Breast epithelium (tissue), 4 donors: ENCODE measurements at regions of chr6 and their contacts with region 1.

Region 1: GRCh38 chr6:138588805-138589434 is 89.6 kb upstream of the NHSL1 start:
- DNase-seq: peak in 1 of 2 donors; percentile 47
- H3K4me3 ChIP-seq: no peak overlapping the region
- H3K27ac ChIP-seq: no peak overlapping the region
- H3K4me1 ChIP-seq: no peaks in the 10 kb centered on the region
- H3K27me3 ChIP-seq: no peaks in the 10 kb centered on the region
- CTCF ChIP-seq: peak; percentile 87 to 95 (median 93)
- POLR2A ChIP-seq: no peak

Region 2: DNA sequence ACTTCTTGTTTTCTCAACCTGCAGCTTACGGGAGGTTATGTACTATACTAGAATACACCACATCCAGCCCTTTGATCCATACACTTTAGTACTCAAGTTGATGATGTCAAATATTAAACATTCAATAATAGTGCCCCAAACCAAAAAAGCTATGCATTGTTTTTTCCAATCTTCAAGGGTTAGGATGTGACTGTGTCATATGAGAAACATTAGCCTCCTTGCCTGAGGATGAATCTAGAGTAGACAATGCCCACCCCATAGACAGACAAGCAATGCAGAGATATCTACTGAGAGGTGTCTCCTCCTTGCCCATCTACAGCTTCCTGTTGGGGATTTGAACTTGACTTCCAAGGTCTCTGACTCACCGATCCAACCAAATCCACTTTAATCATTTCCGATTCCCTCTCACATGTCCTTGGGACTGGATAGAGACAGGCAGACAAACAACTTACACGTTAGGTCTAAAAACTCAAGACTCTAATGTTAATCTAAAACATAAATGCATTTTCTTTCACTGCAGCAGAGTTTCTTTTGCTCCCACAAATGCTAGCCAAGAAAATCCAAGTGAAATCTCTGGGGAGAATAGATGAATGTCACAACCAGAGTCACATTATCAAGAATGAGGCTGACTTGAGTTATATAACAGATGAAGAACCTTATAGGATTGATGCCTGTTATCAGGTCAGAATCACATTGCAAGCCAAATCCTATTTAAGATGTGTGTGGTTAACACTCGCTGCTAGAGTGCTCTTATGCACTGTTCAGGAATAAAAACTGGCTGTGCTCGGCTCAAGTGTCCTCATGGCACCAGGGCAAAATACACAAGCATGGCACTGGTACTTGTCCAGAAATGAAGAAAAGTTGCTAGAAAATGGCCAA is 797.4 kb before region 1 on chr6:
- intact Hi-C with region 1: no loop called
- DNase-seq: no peak
- H3K4me3 ChIP-seq: no peak overlapping the region
- H3K27ac ChIP-seq: no peak overlapping the region
- H3K4me1 ChIP-seq: no peaks in the 10 kb centered on the region
- H3K27me3 ChIP-seq: no peaks in the 10 kb centered on the region
- CTCF ChIP-seq: no peak
- POLR2A ChIP-seq: no peak

Region 3: GRCh38 chr6:138765896-138766655 is 177.2 kb after region 1 on chr6:
- intact Hi-C with region 1: loop called (anchors 5 kb)
- DNase-seq: no peak
- H3K4me3 ChIP-seq: no peak overlapping the region
- H3K27ac ChIP-seq: no peak overlapping the region
- H3K4me1 ChIP-seq: no peaks in the 10 kb centered on the region
- H3K27me3 ChIP-seq: no peaks in the 10 kb centered on the region
- CTCF ChIP-seq: peak; percentile 47 to 80 (median 70)
- POLR2A ChIP-seq: no peak

Region 4: DNA sequence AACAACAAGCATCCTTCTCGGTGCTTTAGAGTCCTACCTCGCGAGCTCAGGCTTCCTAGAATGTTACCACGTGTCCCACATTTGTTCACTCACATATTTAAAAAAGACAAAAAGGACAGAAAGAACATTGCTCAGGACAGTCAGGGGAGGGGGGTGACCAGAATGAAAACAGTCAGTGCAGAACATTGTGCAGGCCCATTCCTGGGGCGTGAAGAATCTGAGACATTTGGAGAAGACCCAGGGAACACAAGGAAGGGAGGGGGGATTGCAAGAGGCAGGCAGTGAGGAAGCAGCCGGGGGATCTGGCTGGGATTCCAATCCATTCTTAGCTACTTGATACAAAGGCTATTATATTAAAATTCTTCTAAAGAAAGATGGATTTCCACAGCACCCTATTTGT is 1055.9 kb after region 1 on chr6:
- intact Hi-C with region 1: loop called (anchors 5 kb)
- DNase-seq: peak in 1 of 2 donors; percentile 41
- H3K4me3 ChIP-seq: no peak overlapping the region
- H3K27ac ChIP-seq: peak overlapping the region in 1 of 2 donors; percentile 10
- H3K4me1 ChIP-seq: no peaks in the 10 kb centered on the region
- H3K27me3 ChIP-seq: no peaks in the 10 kb centered on the region
- CTCF ChIP-seq: no peak
- POLR2A ChIP-seq: no peak